Posterior vena cava (tissue), 2 donors: ENCODE measurements at regions of chr9 and their contacts with region 1.

Region 1: GRCh38 chr9:121566481-121567465 is 67.1 kb upstream of the GGTA1 start:
- DNase-seq: peak; percentile 86

Region 2: GRCh38 chr9:121604242-121604641 is 37.5 kb after region 1 on chr9:
- intact Hi-C with region 1: loop called in 1 of 2 experiments (anchors 5 kb)
- DNase-seq: no peak